CD4-positive, alpha-beta T cell (primary cell): ENCODE measurements at regions of chr6 and their contacts with region 1.

Region 1: DNA sequence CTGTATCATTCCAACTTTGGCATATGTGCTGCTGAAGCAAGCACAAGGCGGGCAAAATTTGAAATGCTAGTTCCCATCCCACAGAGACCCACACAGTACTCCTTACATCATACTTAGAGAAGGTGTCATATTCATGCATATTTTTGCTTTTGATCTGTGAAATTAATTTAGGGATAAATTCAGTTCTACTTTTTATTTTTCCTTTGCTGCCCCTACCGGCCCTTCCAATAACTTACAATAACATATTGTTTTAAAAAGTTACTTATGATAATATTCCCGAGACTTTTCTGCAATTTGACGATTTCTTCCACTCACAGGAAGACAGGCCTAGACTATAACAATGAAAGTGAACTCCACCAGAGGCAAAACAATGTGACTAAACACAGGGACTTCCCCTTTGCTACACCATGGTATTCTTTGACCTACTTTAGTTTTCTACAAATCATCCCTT is 35.0 kb downstream of the SESN1 start:
- DNase-seq: peak in 4 of 14 experiments; percentile 21 to 83 (median 78)
- ATAC-seq: peak; percentile 99
- H3K4me3 ChIP-seq: no peak overlapping the region
- H3K4me3 Mint-ChIP-seq: peak overlapping the region; percentile 11
- H3K27ac ChIP-seq: peak overlapping the region; percentile 29 to 63
- H3K27ac Mint-ChIP-seq: peak overlapping the region; percentile 79
- H3K4me1 ChIP-seq: peaks cover 18% of the 10 kb centered on the region
- H3K4me1 Mint-ChIP-seq: peaks cover 67% of the 10 kb centered on the region
- H3K27me3 ChIP-seq: no peaks in the 10 kb centered on the region
- H3K27me3 Mint-ChIP-seq: no peaks in the 10 kb centered on the region
- CTCF ChIP-seq: no peak

Region 2: GRCh38 chr6:109024784-109025183 is 34.8 kb before region 1 on chr6:
- CTCF ChIA-PET with region 1: interaction called, 3 read pairs
- POLR2A ChIA-PET with region 1: no interaction called
- intact Hi-C with region 1: loop called in 1 of 2 experiments (anchors 5 kb)
- DNase-seq: no peak
- ATAC-seq: no peak
- H3K4me3 ChIP-seq: no peak overlapping the region
- H3K4me3 Mint-ChIP-seq: no peak overlapping the region
- H3K27ac ChIP-seq: no peak overlapping the region
- H3K27ac Mint-ChIP-seq: no peak overlapping the region
- H3K4me1 ChIP-seq: peaks cover 15% of the 10 kb centered on the region
- H3K4me1 Mint-ChIP-seq: peaks cover 52% of the 10 kb centered on the region
- H3K27me3 ChIP-seq: no peaks in the 10 kb centered on the region
- H3K27me3 Mint-ChIP-seq: no peaks in the 10 kb centered on the region
- CTCF ChIP-seq: no peak